ENCODE measurements at regions of chr11 and their contacts with region 1.

Region 1: DNA sequence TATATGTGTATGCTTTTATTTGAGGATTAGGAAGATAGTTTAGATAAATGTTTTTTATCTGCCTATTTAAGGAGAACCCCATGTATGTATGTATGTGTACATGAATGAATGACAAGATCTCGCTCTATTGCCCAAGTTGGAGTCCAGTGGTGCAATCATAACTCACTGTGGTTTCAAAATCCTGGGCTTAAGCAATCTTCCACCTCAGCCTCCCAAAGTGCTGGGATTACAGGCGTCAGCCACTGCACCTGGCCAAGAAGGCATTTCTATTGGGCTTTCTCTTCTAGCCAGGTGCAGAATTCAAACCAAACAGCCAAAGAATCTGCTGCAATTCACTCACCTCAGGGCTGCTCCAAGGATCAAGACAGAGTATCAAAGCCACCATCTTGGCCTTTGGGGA is 25.5 kb upstream of the DGKZ start:
- DNase-seq: no peak
- H3K4me3 Mint-ChIP-seq: no peak overlapping the region
- H3K27ac Mint-ChIP-seq: peak overlapping the region; percentile 19
- H3K4me1 Mint-ChIP-seq: peaks cover 33% of the 10 kb centered on the region
- H3K27me3 Mint-ChIP-seq: peaks cover 3% of the 10 kb centered on the region

Region 2: GRCh38 chr11:46308631-46309419 is 12.9 kb before region 1 on chr11:
- CTCF ChIA-PET with region 1: interaction called, 23 read pairs
- POLR2A ChIA-PET with region 1: no interaction called
- DNase-seq: peak; percentile 68
- H3K4me3 Mint-ChIP-seq: no peak overlapping the region
- H3K27ac Mint-ChIP-seq: peak overlapping the region; percentile 3
- H3K4me1 Mint-ChIP-seq: peaks cover 20% of the 10 kb centered on the region
- H3K27me3 Mint-ChIP-seq: peaks cover 3% of the 10 kb centered on the region

Region 3: DNA sequence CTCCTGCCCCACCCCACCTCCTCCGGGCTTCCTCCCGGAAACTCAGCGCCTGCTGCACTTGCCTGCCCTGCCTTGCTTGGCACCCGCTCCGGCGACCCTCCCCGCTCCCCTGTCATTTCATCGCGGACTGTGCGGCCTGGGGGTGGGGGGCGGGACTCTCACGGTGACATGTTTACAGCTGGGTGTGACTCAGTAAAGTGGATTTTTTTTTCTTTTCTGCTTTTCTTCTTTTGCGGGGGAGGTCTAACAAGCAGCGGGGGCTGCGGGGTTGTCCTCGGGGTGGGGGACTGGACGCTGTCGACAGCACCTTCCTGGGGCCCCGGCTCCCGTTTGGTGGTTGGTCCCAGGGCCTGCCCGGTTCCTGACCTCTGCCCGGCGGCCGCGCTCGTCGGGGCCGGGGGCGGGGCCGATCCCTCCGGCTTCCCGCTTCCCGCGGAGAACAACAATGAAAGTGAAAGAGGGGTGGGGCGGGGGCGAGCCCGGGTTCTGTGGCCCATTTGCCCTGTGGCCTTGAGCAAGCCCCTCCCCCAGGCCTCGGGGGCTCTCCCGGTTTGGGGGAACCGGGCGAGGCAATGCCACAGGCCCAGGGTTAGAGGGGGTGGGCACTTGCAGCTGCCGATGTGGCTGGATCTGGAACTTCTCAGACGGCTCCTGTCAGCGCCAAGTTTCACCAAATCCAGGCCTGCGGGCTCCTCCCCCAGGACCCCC is 58.7 kb after region 1 on chr11:
- CTCF ChIA-PET with region 1: no interaction called
- POLR2A ChIA-PET with region 1: no interaction called
- DNase-seq: peak; percentile 76
- H3K4me3 Mint-ChIP-seq: peak overlapping the region; percentile 69
- H3K27ac Mint-ChIP-seq: peak overlapping the region; percentile 57
- H3K4me1 Mint-ChIP-seq: peaks cover 11% of the 10 kb centered on the region
- H3K27me3 Mint-ChIP-seq: peaks cover 17% of the 10 kb centered on the region

Region 4: DNA sequence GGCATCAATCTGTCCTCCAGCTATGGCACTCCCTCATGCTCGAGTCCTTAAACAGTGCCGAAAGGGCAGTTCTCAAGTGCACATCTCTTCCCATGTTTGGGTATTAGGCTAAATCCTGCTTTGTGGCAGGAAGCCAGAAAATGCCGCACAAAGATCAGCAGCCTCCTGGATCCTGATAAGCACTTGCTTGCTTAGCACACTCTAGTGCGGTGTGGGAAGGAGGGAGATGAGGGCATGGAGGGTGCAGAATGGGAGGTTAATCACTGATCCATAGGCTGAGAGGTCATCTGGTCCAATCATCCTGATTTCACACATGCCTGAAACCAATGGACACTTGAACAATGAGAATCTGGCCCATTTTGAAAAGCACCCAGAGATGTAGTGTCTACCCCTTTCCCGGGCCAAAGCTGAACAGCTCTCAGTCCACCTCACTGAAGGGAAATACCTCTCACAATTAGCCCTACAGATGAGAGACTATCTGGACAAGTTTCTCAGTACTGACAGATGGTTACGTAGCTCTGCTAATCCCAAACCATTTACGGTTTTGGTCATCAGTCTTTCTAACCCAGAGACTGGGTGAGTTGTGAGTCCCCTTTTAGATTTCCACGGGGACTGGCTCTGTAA is 99.6 kb after region 1 on chr11:
- CTCF ChIA-PET with region 1: no interaction called
- POLR2A ChIA-PET with region 1: no interaction called
- DNase-seq: no peak
- H3K4me3 Mint-ChIP-seq: no peak overlapping the region
- H3K27ac Mint-ChIP-seq: no peak overlapping the region
- H3K4me1 Mint-ChIP-seq: no peaks in the 10 kb centered on the region
- H3K27me3 Mint-ChIP-seq: no peaks in the 10 kb centered on the region

Measured in activated CD4-positive, alpha-beta T cell treated with anti-CD3 and anti-CD28 coated beads, Interleukin-2, amount 10 ng/mL, durations not matched to agents 7 days and 5 days (primary cell).